CD4-positive, alpha-beta memory T cell (primary cell): ENCODE measurements at regions of chr7 and their contacts with region 1.

Region 1: DNA sequence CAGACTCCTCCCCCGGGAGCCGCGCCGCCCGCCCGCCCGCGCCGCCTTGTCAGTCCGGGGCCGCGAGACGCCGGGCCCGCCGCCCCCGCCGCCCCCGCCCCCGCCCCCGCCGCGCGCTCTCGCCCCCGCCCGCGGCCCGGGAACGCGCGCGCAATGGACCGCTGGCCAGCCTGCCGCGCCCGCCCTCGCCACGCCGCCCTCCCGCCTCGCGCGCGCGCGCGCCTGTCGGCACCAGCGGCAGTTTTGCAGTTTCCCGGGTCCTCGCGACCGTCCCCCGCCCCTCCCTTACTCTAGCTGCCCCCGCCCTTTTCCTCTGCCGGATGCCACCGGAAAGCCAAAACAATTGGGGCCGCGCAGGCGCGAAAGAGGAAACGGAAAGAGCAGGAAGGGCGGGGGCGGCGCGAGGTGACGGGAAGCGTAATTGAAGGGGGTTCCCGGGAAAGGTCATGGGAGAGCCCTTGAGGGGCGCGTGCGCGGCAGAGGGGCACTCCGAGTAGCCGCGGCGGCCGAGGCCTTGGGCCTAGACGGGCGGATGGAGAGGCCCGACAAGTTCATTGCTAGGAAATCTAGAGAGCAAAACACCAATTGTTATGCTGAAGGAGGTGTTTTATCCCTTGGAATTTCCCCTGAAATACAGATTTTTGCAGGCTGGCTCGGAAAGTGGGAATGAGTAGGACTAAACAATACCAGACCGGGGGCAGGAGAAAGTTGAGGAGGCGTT is 400 bp upstream of the KBTBD2 start:
- DNase-seq: peak; percentile 96 to 98 (median 98)
- H3K4me3 ChIP-seq: peak overlapping the region; percentile 80 to 83
- H3K4me3 Mint-ChIP-seq: peak overlapping the region; percentile 92 to 97 (median 94)
- H3K27ac ChIP-seq: peak overlapping the region; percentile 99
- H3K27ac Mint-ChIP-seq: peak overlapping the region; percentile 95 to 100 (median 99)
- H3K4me1 ChIP-seq: peaks cover 46% of the 10 kb centered on the region
- H3K4me1 Mint-ChIP-seq: peaks cover 37 to 59% (median 47%) of the 10 kb centered on the region in 4 donors
- H3K27me3 ChIP-seq: no peaks in the 10 kb centered on the region
- H3K27me3 Mint-ChIP-seq: no peaks in the 10 kb centered on the region

Region 2: DNA sequence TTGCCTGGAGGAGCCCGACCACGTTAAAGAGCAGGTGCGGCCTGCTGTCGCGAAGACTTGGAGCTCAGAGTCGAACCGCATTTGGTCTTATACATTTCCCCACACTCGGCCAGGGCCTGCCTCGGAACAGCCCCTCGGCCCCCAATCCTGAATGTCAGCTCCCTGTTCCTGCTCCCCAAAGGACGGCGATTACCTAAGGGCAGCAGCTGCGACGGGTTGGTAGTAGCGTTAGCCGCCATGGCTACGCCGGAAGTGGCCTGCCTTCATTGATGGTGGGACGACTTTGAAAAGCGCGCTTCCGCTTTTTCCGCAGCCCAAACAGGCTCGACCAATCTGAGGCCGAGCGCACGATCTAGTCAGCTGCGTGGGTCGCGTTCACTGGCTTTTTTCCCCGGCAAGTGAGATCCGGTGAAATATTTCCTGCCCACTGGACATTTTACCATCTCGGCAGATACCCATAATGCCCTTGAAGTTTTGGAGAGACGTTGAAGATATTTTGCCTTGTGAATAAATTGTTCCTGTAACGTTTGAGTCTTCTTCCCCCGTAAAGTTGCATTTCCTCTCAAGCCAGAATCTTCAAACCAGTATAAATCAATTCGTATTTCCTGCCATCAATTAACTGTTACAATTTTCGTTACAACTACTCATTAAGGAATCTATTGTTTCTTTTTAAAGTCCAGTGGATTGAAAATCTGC is 401.7 kb before region 1 on chr7 and contains the start of gene LSM5:
- CTCF ChIA-PET with region 1: no interaction called
- POLR2A ChIA-PET with region 1: interaction called, 16 read pairs
- intact Hi-C with region 1: loop called (anchors 1 kb)
- DNase-seq: peak; percentile 89 to 92 (median 90)
- H3K4me3 ChIP-seq: peak within 1 kb of the TSS; percentile 67 to 96
- H3K4me3 Mint-ChIP-seq: peak within 1 kb of the TSS; percentile 82 to 96 (median 92)
- H3K27ac ChIP-seq: peak within 1 kb of the TSS; percentile 79
- H3K27ac Mint-ChIP-seq: peak within 1 kb of the TSS; percentile 92 to 97 (median 94)
- H3K4me1 ChIP-seq: peaks cover 27% of the 10 kb centered on the region
- H3K4me1 Mint-ChIP-seq: peaks cover 7 to 30% (median 22%) of the 10 kb centered on the region in 4 donors
- H3K27me3 ChIP-seq: no peaks in the 10 kb centered on the region
- H3K27me3 Mint-ChIP-seq: no peaks in the 10 kb centered on the region
- total RNA-seq, gene LSM5: 37.6 to 37.8 TPM

Region 3: DNA sequence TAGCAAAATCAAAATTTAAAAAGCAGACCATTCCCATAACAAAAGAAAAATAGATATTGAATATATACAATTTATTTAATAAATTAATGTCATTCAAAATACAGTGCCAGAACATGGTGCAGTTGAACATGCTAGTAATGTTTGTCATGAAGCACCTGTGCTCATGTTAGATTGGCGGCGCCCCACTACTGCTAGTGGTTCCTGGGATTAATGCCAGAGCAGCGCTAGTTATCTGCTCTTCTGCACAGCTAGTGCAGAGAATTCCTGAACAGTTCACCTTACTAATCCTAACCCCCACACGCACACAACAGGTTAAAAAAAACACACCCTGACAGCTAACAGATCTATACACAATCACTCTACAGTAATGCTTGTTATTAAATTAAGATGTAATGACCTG is 23.8 kb before region 1 on chr7:
- CTCF ChIA-PET with region 1: interaction called, 5 read pairs
- POLR2A ChIA-PET with region 1: interaction called, 21 read pairs
- intact Hi-C with region 1: no loop called
- DNase-seq: no peak
- H3K4me3 ChIP-seq: no peak overlapping the region
- H3K4me3 Mint-ChIP-seq: no peak overlapping the region
- H3K27ac ChIP-seq: no peak overlapping the region
- H3K27ac Mint-ChIP-seq: peak overlapping the region in 1 of 7 donors; percentile 7
- H3K4me1 ChIP-seq: peaks cover 5% of the 10 kb centered on the region
- H3K4me1 Mint-ChIP-seq: peaks cover 15 to 35% (median 17%) of the 10 kb centered on the region in 4 donors
- H3K27me3 ChIP-seq: no peaks in the 10 kb centered on the region
- H3K27me3 Mint-ChIP-seq: no peaks in the 10 kb centered on the region

Region 4: GRCh38 chr7:32905175-32905662 is 13.3 kb after region 1 on chr7:
- CTCF ChIA-PET with region 1: interaction called, 25 read pairs
- POLR2A ChIA-PET with region 1: interaction called, 111 read pairs
- intact Hi-C with region 1: loop called (anchors 1 kb)
- DNase-seq: peak; percentile 81 to 90 (median 87)
- H3K4me3 ChIP-seq: peak overlapping the region in 1 of 2 donors; percentile 46
- H3K4me3 Mint-ChIP-seq: peak overlapping the region; percentile 82 to 91 (median 86)
- H3K27ac ChIP-seq: peak overlapping the region; percentile 44
- H3K27ac Mint-ChIP-seq: peak overlapping the region; percentile 94 to 99 (median 98)
- H3K4me1 ChIP-seq: peaks cover 21% of the 10 kb centered on the region
- H3K4me1 Mint-ChIP-seq: peaks cover 10 to 20% (median 15%) of the 10 kb centered on the region in 4 donors
- H3K27me3 ChIP-seq: no peaks in the 10 kb centered on the region
- H3K27me3 Mint-ChIP-seq: no peaks in the 10 kb centered on the region

Region 5: DNA sequence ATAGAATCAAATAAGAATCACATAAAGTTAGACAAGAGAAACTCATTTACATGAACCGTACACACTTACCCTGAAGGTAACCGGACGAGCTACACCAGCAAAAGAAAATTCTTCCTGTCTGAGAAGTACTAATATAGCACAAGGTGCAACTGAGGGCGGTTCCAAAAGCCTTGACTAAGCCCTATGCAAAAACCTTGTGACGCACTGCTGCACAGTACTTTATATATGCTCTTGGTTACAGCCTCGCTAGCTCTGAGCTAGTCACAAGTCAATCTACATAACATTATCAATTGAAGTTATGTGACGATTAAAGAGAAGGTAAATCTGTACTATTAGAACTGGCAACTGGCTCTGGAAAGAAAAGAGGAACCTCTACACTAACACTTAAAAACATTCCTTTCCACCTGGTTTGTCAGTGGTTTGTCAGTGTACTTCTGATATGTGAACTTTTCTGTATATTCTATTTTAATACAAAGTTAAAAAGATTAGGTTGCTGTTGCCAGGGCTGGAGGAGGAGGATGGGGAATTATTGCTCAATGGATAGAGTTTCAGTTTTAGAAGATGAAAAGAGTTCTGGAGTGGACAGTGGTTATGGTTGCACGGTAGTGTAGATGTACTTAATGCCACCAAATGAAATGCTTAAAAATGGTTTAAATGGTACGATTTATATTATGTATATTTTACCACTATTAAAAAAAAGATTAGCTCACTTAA is 149.0 kb after region 1 on chr7:
- CTCF ChIA-PET with region 1: no interaction called
- POLR2A ChIA-PET with region 1: interaction called, 20 read pairs
- intact Hi-C with region 1: no loop called
- DNase-seq: peak; percentile 70 to 90 (median 81)
- H3K4me3 ChIP-seq: peak overlapping the region; percentile 6 to 52
- H3K4me3 Mint-ChIP-seq: peak overlapping the region; percentile 75 to 92 (median 84)
- H3K27ac ChIP-seq: peak overlapping the region; percentile 64
- H3K27ac Mint-ChIP-seq: peak overlapping the region; percentile 88 to 97 (median 94)
- H3K4me1 ChIP-seq: peaks cover 72% of the 10 kb centered on the region
- H3K4me1 Mint-ChIP-seq: peaks cover 34 to 71% (median 53%) of the 10 kb centered on the region in 4 donors
- H3K27me3 ChIP-seq: no peaks in the 10 kb centered on the region
- H3K27me3 Mint-ChIP-seq: no peaks in the 10 kb centered on the region

Region 6: DNA sequence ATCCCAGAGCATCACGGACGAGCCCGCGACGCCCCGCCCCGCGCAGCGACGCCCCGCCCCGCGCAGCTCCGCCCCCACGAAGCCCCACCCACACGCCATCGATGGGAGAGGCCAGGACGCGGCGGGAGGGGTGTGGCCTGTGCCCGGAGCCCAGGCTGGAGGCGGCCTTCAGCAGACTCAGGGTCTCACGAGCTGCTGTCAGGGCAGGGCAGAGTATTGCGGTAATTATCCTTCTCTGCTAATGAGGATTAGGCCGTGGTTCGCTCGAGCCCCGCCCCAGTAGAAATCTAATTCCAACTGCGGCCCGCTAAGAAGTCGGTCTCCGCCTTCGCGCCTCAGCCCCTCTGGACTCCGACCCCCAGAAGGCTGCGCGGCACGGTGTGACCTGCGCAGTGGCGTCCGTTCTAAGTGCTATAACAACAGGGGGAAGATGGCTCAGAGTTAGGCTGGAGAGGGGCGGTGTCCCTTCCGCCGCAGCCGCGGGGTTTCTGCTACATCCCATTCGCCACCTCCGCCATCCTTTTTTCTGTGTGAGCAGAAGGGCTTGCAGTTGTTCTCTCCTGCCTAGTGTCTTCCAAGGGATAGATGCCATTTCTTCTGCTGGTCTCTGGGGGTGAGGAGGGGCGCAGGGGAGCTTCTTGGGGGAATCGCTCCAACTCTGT is 171.0 kb after region 1 on chr7:
- CTCF ChIA-PET with region 1: interaction called, 3 read pairs
- POLR2A ChIA-PET with region 1: interaction called, 48 read pairs
- intact Hi-C with region 1: loop called (anchors 1 kb)
- DNase-seq: peak; percentile 93 to 95 (median 94)
- H3K4me3 ChIP-seq: peak overlapping the region; percentile 75 to 98
- H3K4me3 Mint-ChIP-seq: peak overlapping the region; percentile 95 to 98 (median 96)
- H3K27ac ChIP-seq: peak overlapping the region; percentile 87
- H3K27ac Mint-ChIP-seq: peak overlapping the region; percentile 93 to 99 (median 96)
- H3K4me1 ChIP-seq: peaks cover 40% of the 10 kb centered on the region
- H3K4me1 Mint-ChIP-seq: peaks cover 29 to 48% (median 35%) of the 10 kb centered on the region in 4 donors
- H3K27me3 ChIP-seq: no peaks in the 10 kb centered on the region
- H3K27me3 Mint-ChIP-seq: peaks cover 1 to 2% of the 10 kb centered on the region in 2 donors